Heart right ventricle (tissue), 16 donors: ENCODE measurements at regions of chr1 and their contacts with region 1.

Region 1: DNA sequence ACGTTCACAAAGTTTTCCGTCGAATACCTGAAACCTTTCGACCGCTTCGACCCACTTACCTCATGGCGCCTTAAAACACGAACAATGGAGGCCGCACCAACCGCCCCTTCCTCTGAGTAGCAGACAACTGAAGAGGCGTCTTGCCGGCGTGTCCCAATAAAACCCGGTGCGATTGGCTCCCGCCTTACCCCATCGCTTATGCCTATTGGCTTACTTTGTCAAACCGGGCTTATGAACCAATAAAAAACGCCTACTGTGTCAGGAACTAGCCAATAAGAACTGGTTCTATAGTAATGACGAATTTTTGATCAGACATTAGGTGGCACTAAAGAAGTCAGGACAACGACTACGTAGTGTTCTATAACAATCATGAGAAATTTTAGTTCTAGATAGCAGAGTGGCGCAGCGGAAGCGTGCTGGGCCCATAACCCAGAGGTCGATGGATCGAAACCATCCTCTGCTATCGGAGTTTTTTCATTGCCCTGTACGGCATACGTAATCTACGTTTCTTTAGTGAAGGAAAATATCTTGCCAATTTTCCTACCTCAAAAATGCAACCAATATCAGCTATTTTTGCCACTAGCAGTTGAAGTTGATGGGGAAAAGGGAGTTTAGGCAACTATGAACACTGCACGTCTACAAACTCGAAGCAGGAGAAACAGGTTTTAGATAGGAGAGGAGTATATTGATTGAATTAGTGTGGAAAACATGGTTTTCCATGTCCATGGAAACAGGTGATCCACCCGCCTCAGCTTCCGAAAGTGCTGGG is at the start of gene ILF2:
- DNase-seq: peak; percentile 97 to 99
- ATAC-seq: peak; percentile 95 to 98 (median 97)
- H3K4me3 ChIP-seq: peak within 1 kb of the TSS; percentile 55 to 98 (median 80)
- H3K27ac ChIP-seq: peak within 1 kb of the TSS; percentile 21 to 92 (median 85)
- H3K4me1 ChIP-seq: peaks cover 0 to 30% (median 19%) of the 10 kb centered on the region in 9 donors
- H3K27me3 ChIP-seq: no peaks in the 10 kb centered on the region
- CTCF ChIP-seq: peak in 6 of 9 donors; percentile 19 to 50 (median 31)
- total RNA-seq, gene ILF2: 61.1 to 87.3 (median 70.8) TPM

Region 2: DNA sequence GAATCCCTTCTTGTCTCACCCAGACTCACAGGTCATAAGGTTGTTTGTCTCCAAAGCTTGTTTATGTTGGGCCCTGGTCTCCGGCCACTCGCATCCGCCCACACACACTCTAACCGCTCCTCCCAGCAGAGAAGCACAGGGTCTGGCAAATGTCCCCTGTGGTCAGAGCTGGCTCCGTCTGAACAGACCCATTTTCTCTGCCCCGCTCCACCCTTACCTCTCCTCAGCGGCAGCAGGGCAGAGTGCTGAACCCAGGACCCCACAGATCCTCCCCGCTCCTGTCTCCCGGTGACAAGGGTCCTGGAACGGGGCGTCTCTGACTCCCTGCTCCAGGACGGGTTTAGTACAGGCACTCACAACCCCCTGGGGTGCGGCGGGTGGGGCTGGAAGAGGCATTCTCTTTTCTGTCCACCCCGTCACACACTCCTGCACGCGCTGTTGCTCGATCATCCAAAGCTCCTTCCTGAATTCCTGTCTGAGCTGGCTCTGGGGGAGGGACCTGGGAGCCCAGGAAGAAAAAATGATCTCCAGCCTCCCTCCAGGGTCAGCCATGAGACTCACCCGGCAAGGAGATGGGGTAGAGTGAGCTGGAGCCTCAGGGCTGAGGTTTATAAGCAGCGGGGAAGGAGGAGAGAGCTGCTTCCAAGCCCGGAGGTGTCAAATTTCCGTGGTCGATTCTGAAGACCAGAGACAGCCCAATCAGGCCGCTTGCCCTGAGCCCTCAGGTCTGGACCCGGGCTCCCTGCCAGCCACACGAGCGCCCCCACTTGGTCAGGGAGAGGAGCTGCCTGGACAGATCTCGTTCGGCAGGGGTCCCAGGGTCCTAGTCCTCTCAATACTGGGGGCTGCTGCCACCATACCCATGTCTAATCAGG is 43.9 kb before region 1 on chr1 and contains the start of gene S100A13:
- intact Hi-C with region 1: loop called in 2 of 10 experiments (anchors 5 kb)
- DNase-seq: peak; percentile 80 to 84
- ATAC-seq: peak; percentile 54 to 73 (median 64)
- H3K4me3 ChIP-seq: peak within 1 kb of the TSS; percentile 34 to 71 (median 60)
- H3K27ac ChIP-seq: peak within 1 kb of the TSS; percentile 82 to 98 (median 91)
- H3K4me1 ChIP-seq: peaks cover 19 to 75% (median 54%) of the 10 kb centered on the region in 9 donors
- H3K27me3 ChIP-seq: no peaks in the 10 kb centered on the region
- CTCF ChIP-seq: peak; percentile 32 to 69 (median 59)
- total RNA-seq, gene S100A13: 101 to 150 (median 125) TPM

Region 3: DNA sequence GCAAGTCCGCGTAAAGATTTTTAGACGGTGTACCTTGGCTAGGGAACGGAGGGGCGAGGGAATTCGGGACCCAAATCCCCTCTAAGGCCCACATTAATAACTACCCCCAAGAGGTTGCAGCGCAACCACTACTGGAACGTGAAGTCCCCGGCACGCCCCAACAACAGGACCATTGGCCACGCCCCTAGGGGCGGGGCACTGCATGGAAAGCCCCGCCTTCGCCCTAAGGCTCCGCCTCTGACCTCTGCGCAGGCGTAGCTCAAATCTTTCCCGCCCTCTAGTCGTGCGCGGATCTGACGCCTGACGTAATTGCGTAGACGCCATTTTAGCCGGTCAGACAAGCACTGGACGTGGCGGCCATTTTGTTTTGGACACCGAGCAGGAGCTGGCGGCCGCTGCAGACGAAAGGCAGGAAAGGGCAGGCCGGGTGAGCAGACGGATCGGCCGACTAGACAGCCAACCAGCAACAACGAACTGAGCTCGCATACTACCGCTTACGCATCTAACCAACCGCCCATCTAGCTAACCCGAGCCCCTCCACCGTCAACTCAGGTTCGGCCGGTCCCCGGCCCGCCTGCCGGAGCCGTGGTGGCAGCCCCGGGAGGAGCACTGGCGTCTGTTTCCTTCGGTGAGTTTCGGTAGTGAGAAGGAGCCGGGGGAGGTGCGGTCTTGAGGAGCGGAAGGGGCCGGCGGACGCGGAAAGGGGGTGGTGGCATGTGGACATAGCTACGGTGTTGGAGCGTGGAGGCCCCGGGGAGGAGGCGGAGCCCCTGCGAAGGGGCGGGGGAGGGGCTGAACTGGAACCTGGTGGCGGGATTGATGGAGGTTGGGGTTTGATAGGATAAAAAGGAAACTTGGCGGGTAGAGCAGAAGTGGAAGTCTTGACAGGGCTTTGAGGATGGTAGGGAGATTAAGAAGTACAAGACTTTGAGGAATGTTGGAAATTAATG is 37.1 kb before region 1 on chr1 and contains the start of gene CHTOP:
- intact Hi-C with region 1: loop called in 3 of 10 experiments (anchors 2 to 5 kb)
- DNase-seq: peak; percentile 96 to 98
- ATAC-seq: peak; percentile 91 to 96 (median 94)
- H3K4me3 ChIP-seq: peak within 1 kb of the TSS; percentile 67 to 95 (median 90)
- H3K27ac ChIP-seq: peak within 1 kb of the TSS; percentile 98 to 100 (median 100)
- H3K4me1 ChIP-seq: peaks cover 10 to 88% (median 66%) of the 10 kb centered on the region in 9 donors
- H3K27me3 ChIP-seq: no peaks in the 10 kb centered on the region
- CTCF ChIP-seq: no peak
- total RNA-seq, gene CHTOP: 67.4 to 95.5 (median 77.8) TPM